Activated CD8-positive, alpha-beta T cell treated with anti-CD3 and anti-CD28 coated beads for 36 hours (primary cell): ENCODE measurements at regions of chr12 and their contacts with region 1.

Region 1: DNA sequence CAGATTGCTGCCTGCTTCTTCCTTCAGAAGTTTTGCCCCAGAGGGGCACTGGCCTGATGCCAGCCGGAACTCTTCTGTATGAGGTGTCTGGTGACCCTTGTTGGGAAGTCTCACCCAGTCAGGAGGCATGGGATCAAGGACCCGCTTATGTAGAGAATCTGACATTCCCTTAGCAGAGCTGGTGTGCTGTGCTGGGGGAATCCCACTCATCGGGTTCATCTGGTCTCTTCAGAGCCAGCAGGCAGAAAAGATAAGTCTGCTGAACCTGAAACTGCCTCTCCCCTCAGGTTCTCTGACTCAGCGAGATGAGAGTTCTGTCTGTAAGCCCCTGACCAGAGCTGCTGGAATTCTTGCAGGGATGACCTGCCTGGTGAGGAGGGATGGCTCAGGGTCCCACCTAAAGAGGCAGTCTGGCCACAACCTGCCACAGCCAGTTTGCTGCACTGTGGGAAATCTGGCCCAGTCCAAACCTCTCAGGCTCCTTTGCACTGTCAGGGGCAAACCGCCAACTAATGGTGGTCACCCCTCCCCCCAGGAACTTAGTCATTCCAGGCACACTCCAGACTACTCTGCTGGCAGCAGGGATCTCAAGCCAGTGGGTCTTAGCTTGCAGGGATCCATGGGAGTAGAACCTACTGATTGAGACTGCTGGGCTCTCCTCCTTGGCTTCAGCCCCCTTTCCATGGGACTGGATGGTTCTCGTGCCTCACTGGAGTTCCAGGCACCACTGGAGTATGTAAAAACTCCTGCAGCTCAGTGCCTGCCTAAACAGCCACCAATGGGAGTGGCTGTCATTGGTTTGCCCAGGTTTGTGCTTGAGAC is 4.1 kb downstream of the CLEC2D start:
- DNase-seq: peak; percentile 90
- ATAC-seq: peak; percentile 41
- H3K4me3 Mint-ChIP-seq: peak overlapping the region; percentile 94
- H3K27ac Mint-ChIP-seq: peak overlapping the region; percentile 99
- H3K4me1 Mint-ChIP-seq: peaks cover 35% of the 10 kb centered on the region
- H3K27me3 Mint-ChIP-seq: no peaks in the 10 kb centered on the region
- CTCF ChIP-seq: no peak

Region 2: DNA sequence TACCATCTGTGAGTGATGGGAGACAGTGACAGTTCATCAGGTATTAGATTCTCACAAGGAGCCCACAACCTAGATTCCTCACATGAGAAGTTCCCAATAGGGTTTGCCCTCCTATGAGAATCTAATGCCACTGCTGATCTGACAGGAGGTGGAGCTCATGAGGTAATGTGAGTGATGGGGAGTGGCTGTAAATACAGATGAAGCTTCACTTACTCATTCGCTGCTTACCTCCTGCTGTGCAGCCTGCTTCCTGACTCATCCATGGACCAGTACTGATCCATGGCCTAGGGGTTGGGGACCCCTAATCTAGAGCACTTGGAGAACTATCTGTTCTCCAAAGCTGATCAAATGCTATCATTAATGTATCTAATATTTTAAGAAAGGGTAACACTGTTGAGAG is 13.6 kb after region 1 on chr12:
- CTCF ChIA-PET with region 1: interaction called, 3 read pairs
- POLR2A ChIA-PET with region 1: interaction called, 738 read pairs
- intact Hi-C with region 1: no loop called
- DNase-seq: peak; percentile 43
- ATAC-seq: peak; percentile 70
- H3K4me3 Mint-ChIP-seq: no peak overlapping the region
- H3K27ac Mint-ChIP-seq: peak overlapping the region; percentile 42
- H3K4me1 Mint-ChIP-seq: peaks cover 74% of the 10 kb centered on the region
- H3K27me3 Mint-ChIP-seq: no peaks in the 10 kb centered on the region
- CTCF ChIP-seq: no peak

Region 3: GRCh38 chr12:9731797-9732196 is 58.2 kb after region 1 on chr12:
- CTCF ChIA-PET with region 1: no interaction called
- POLR2A ChIA-PET with region 1: interaction called, 11 read pairs
- intact Hi-C with region 1: no loop called
- DNase-seq: no peak
- ATAC-seq: peak; percentile 65
- H3K4me3 Mint-ChIP-seq: peak overlapping the region; percentile 76
- H3K27ac Mint-ChIP-seq: peak overlapping the region; percentile 88
- H3K4me1 Mint-ChIP-seq: peaks cover 46% of the 10 kb centered on the region
- H3K27me3 Mint-ChIP-seq: no peaks in the 10 kb centered on the region
- CTCF ChIP-seq: no peak

Region 4: DNA sequence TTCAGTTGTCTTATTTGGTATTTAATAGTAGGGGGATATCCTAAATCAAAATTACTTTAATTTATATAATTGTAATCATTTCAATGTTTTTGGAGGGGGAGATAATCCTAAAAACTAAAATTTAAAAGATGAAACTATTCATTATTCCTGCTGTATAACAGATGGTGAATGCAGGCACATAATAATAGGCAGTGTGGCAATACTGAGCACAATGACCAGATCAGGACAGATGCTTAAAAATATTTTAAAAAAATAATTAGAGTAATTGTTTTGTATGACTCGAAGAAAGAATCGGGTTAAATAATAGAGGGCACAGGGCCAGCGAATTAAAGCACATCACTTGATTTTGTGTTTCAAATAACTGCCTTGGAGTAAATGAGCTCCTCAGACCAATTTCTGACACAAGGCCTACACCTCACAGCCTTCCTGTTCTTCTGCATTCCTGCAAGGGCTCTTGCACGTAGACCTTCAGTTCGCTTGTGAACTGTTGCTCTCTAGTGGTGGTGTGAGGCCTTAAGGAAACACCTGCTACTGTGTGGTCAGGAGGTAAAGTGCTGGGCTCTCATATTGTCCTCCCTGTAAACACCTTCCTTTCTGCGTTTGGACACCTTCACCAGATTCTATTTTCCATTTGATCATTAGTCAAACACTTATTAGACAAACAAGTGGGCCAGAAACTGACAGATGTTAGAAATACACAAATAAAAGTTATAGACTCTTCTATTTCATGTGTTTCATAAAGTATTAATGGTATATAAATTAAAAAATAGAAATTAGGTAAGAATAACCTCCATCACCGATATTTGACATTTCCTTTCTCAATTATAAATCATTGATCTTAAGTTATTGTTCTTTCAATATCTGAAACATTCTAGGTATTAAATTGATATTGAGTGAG is 124.4 kb after region 1 on chr12:
- CTCF ChIA-PET with region 1: interaction called, 6 read pairs
- POLR2A ChIA-PET with region 1: interaction called, 18 read pairs
- intact Hi-C with region 1: no loop called
- DNase-seq: peak; percentile 84
- ATAC-seq: peak; percentile 83
- H3K4me3 Mint-ChIP-seq: peak overlapping the region; percentile 74
- H3K27ac Mint-ChIP-seq: peak overlapping the region; percentile 86
- H3K4me1 Mint-ChIP-seq: peaks cover 47% of the 10 kb centered on the region
- H3K27me3 Mint-ChIP-seq: no peaks in the 10 kb centered on the region
- CTCF ChIP-seq: peak; percentile 80

Region 5: GRCh38 chr12:10554228-10554755 is 880.7 kb after region 1 on chr12:
- CTCF ChIA-PET with region 1: no interaction called
- POLR2A ChIA-PET with region 1: interaction called, 14 read pairs
- intact Hi-C with region 1: loop called (anchors 5 kb)
- DNase-seq: peak; percentile 68
- ATAC-seq: peak; percentile 38
- H3K4me3 Mint-ChIP-seq: peak overlapping the region; percentile 86
- H3K27ac Mint-ChIP-seq: peak overlapping the region; percentile 99
- H3K4me1 Mint-ChIP-seq: peaks cover 51% of the 10 kb centered on the region
- H3K27me3 Mint-ChIP-seq: no peaks in the 10 kb centered on the region
- CTCF ChIP-seq: no peak